Posterior cingulate gyrus (tissue), 11 donors: ENCODE measurements at regions of chr21 and their contacts with region 1.

Region 1: DNA sequence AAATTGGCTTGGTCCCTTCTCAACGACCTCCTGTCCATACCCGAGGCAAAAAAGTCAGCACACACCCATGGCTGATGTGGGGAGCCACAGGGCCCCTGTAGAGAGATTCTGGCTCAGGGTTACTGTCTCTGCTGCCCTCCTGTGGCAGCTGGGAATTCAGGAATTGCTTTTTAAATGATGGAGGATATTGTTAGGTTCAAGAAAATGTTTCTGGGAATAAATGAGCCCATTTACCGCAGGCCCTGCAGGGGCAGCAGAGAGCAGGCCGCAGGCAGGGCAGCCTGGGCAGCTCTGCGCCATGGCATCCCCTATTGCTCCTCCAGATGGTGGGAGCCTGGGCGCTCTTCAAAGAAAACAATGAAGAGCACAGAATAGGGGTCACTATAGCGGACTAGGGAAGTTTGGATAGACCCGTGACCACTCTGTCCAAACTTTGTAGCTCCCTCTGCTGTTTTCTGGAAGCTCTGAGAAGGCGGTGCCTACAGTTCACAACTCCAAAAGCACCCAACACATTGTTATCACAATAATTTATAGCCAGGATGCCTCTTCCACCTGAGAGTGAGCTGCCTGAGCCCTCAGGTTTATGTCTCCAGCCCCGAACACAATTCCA is 201.1 kb downstream of the BACH1 start:
- DNase-seq: peak in 5 of 10 donors; percentile 10 to 81 (median 43)

Region 2: DNA sequence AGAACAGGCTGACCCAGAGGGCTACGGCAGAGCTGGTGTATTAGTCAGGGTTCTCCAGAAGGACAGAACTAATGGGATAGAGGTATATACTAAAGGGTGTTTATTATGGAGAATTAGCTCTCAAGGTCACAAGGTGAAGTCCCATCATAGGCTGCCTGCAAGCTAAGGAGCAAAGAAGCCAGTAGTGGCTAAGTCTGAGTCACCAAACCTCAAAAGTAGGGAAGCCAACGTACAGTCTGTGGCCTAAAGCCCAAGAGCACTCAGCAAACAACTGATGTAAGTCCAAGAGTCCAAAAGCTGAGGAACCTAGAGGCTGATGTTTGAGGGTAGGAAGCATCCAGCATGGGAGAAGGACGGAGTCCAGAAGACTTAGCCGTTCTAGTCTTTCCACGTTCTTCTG is 21.9 kb before region 1 on chr21:
- intact Hi-C with region 1: loop called (anchors 1 kb)
- DNase-seq: no peak